ENCODE measurements at regions of chr19 and their contacts with region 1.

Region 1: GRCh38 chr19:58182989-58183816 is at the start of gene ZNF274:
- DNase-seq: peak; percentile 89 to 96 (median 92)
- ATAC-seq: peak; percentile 85
- H3K4me3 ChIP-seq: peak within 1 kb of the TSS; percentile 99
- H3K4me3 Mint-ChIP-seq: peak within 1 kb of the TSS; percentile 97
- H3K27ac ChIP-seq: peak within 1 kb of the TSS; percentile 99 to 100
- H3K27ac Mint-ChIP-seq: peak within 1 kb of the TSS; percentile 100
- H3K4me1 ChIP-seq: peaks cover 27% of the 10 kb centered on the region
- H3K4me1 Mint-ChIP-seq: peaks cover 23% of the 10 kb centered on the region
- H3K27me3 ChIP-seq: no peaks in the 10 kb centered on the region
- H3K27me3 Mint-ChIP-seq: no peaks in the 10 kb centered on the region
- CTCF ChIP-seq: no peak
- total RNA-seq, gene ZNF274: 51.0 to 51.4 TPM

Region 2: DNA sequence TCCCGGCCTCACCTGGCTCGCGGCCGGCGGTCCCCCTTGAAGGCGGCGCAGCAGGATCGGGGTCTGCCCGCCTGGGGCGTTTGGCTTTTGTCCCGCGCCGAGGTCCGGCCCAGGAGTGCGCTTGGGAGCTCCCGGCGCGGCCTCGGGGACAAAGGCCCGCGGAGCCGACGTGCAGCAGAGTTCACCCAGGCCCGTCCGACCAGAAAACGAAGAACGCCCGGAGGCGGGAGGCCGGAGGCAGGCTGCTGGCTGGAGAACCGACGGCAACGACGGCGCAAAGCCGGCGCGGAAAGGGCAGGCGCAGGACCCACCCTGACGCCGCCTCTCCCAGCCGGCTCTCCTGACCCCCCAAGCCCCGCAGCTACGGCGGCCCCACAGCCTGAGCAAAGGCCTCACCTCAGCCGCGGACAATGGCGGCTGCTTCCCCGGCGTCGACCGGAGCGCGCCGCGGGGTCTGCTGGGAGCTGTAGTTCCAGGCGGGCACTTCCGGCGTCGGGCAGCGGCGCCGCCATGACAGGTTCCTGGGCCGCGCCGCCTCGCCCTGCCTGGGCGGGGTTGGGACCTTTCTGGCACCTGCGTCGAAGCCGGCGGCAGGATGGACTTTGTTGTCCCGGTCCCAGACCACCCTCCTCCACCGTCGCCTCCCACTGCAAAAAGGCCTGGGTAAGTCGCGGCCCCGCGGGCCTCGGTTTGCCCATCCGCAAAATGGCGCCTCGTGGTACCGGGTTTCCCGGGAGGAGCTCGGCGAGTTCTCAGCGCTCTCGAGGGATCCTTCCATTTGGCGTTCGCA is 180.6 kb before region 1 on chr19 and contains the start of gene ZNF606:
- CTCF ChIA-PET with region 1: no interaction called
- POLR2A ChIA-PET with region 1: interaction called, 32 read pairs
- intact Hi-C with region 1: no loop called
- DNase-seq: peak; percentile 69 to 93 (median 81)
- ATAC-seq: peak; percentile 96
- H3K4me3 ChIP-seq: peak within 1 kb of the TSS; percentile 95
- H3K4me3 Mint-ChIP-seq: peak within 1 kb of the TSS; percentile 90
- H3K27ac ChIP-seq: peak within 1 kb of the TSS; percentile 71 to 87
- H3K27ac Mint-ChIP-seq: peak within 1 kb of the TSS; percentile 93
- H3K4me1 ChIP-seq: peaks cover 24% of the 10 kb centered on the region
- H3K4me1 Mint-ChIP-seq: peaks cover 23% of the 10 kb centered on the region
- H3K27me3 ChIP-seq: no peaks in the 10 kb centered on the region
- H3K27me3 Mint-ChIP-seq: no peaks in the 10 kb centered on the region
- CTCF ChIP-seq: no peak
- total RNA-seq, gene ZNF606: 11.1 to 13.6 TPM

Region 3: DNA sequence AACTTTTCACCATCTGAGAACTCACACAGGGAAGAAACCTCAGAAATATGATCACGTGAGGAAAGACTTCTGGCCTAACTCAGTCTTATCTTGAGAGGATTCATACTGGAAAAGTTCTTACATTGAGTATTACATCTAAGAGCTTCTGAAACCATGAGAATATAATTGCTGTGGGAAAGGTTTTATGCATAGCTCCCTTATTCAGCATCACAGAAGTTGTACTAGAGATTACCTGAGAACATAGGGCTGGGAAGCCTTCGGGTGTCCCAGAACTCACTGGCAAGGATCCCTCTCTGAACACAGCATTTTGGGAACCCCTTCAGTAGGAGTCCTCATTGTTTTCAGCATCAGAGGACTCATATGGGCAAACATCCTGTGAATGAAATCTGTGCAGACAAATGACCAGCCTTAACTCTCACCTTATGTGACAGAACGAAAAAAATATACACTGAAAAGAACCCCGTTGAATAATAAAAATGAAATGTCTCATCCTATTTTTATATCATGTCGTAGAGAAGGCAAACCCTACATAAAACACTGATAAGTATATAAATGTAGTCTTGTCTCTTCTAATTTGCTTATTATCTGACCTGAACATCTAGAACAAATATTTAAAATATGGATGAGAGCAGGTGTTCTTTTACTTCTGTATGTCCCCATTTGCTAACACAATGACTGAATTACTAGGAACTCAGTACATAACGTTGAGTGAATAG is 13.9 kb after region 1 on chr19:
- CTCF ChIA-PET with region 1: interaction called, 3 read pairs
- POLR2A ChIA-PET with region 1: interaction called, 11 read pairs
- intact Hi-C with region 1: no loop called
- DNase-seq: peak in 1 of 14 experiments; percentile 21
- ATAC-seq: no peak
- H3K4me3 ChIP-seq: no peak overlapping the region
- H3K4me3 Mint-ChIP-seq: no peak overlapping the region
- H3K27ac ChIP-seq: no peak overlapping the region
- H3K27ac Mint-ChIP-seq: no peak overlapping the region
- H3K4me1 ChIP-seq: no peaks in the 10 kb centered on the region
- H3K4me1 Mint-ChIP-seq: no peaks in the 10 kb centered on the region
- H3K27me3 ChIP-seq: no peaks in the 10 kb centered on the region
- H3K27me3 Mint-ChIP-seq: no peaks in the 10 kb centered on the region
- CTCF ChIP-seq: no peak

Region 4: GRCh38 chr19:58209577-58209976 is 26.4 kb after region 1 on chr19:
- CTCF ChIA-PET with region 1: no interaction called
- POLR2A ChIA-PET with region 1: no interaction called
- intact Hi-C with region 1: no loop called
- DNase-seq: no peak
- ATAC-seq: no peak
- H3K4me3 ChIP-seq: no peak overlapping the region
- H3K4me3 Mint-ChIP-seq: no peak overlapping the region
- H3K27ac ChIP-seq: no peak overlapping the region
- H3K27ac Mint-ChIP-seq: no peak overlapping the region
- H3K4me1 ChIP-seq: no peaks in the 10 kb centered on the region
- H3K4me1 Mint-ChIP-seq: no peaks in the 10 kb centered on the region
- H3K27me3 ChIP-seq: no peaks in the 10 kb centered on the region
- H3K27me3 Mint-ChIP-seq: no peaks in the 10 kb centered on the region
- CTCF ChIP-seq: no peak

Region 5: DNA sequence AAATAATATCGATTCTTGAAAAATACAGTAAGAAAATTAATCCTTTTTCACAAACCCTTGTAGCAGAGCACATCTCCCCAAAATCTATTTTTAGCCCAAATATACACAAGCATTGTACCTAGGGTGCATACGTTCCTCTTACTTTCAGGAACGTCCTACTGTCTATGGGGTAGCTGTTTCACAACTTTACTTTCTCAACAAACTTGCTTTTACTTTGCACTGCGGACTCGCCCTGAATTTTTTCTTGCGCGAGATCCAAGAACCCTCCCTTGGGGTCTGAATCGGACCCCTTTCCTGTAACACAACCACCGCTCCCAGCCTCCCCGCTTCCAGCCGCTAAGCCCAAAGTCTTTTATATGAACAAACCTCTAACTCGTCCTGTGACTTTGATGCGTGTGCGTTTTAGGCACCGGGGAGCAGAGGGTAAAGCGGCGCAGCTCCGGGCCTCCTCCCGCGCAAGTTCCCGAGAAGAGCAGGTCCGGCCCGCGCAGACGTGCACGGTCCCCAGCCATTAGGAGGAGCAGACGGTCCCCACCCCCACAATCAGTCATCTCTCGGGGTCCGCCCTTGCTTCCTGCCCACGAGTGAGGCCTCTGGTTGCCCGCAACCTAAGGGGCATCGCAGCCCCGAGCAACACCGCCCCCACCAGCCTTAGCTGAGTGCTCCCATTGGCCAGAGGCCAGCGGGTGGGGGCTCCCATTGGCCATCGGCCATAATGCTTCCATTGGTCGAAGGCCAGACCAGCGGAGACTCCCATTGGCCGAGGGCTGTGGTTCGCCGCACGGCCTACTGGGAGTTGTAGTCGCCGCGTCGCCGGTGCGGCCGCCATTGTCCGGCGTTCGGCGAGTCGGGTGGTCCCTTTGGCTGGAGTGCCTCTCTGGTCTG is 95.2 kb after region 1 on chr19 and contains the start of gene ZNF8:
- CTCF ChIA-PET with region 1: no interaction called
- POLR2A ChIA-PET with region 1: interaction called, 20 read pairs
- intact Hi-C with region 1: loop called (anchors 1 kb)
- DNase-seq: peak; percentile 89 to 99 (median 96)
- ATAC-seq: peak; percentile 96
- H3K4me3 ChIP-seq: peak within 1 kb of the TSS; percentile 89
- H3K4me3 Mint-ChIP-seq: peak within 1 kb of the TSS; percentile 98
- H3K27ac ChIP-seq: peak within 1 kb of the TSS; percentile 81 to 85
- H3K27ac Mint-ChIP-seq: peak within 1 kb of the TSS; percentile 92
- H3K4me1 ChIP-seq: peaks cover 29% of the 10 kb centered on the region
- H3K4me1 Mint-ChIP-seq: peaks cover 45% of the 10 kb centered on the region
- H3K27me3 ChIP-seq: no peaks in the 10 kb centered on the region
- H3K27me3 Mint-ChIP-seq: no peaks in the 10 kb centered on the region
- CTCF ChIP-seq: no peak
- total RNA-seq, gene ZNF8: 9.5 to 9.6 TPM

Region 6: GRCh38 chr19:58362272-58362994 is 179.2 kb after region 1 on chr19 and contains the start of gene ZNF497:
- CTCF ChIA-PET with region 1: no interaction called
- POLR2A ChIA-PET with region 1: interaction called, 15 read pairs
- intact Hi-C with region 1: no loop called
- DNase-seq: peak; percentile 92 to 99 (median 97)
- ATAC-seq: peak; percentile 90
- H3K4me3 ChIP-seq: peak within 1 kb of the TSS; percentile 84
- H3K4me3 Mint-ChIP-seq: peak within 1 kb of the TSS; percentile 94
- H3K27ac ChIP-seq: peak within 1 kb of the TSS; percentile 58 to 69
- H3K27ac Mint-ChIP-seq: peak within 1 kb of the TSS; percentile 84
- H3K4me1 ChIP-seq: peaks cover 22% of the 10 kb centered on the region
- H3K4me1 Mint-ChIP-seq: peaks cover 12% of the 10 kb centered on the region
- H3K27me3 ChIP-seq: no peaks in the 10 kb centered on the region
- H3K27me3 Mint-ChIP-seq: no peaks in the 10 kb centered on the region
- CTCF ChIP-seq: no peak
- total RNA-seq, gene ZNF497: 0.28 to 0.55 TPM

Region 7: GRCh38 chr19:58400916-58401839 is 218.0 kb after region 1 on chr19:
- CTCF ChIA-PET with region 1: no interaction called
- POLR2A ChIA-PET with region 1: no interaction called
- intact Hi-C with region 1: loop called in 1 of 2 experiments (anchors 5 kb)
- DNase-seq: peak; percentile 98 to 100 (median 99)
- ATAC-seq: peak; percentile 95
- H3K4me3 ChIP-seq: peak overlapping the region; percentile 75
- H3K4me3 Mint-ChIP-seq: peak overlapping the region; percentile 88
- H3K27ac ChIP-seq: peak overlapping the region; percentile 59 to 94
- H3K27ac Mint-ChIP-seq: peak overlapping the region; percentile 86
- H3K4me1 ChIP-seq: peaks cover 20% of the 10 kb centered on the region
- H3K4me1 Mint-ChIP-seq: peaks cover 9% of the 10 kb centered on the region
- H3K27me3 ChIP-seq: peaks cover 11 to 15% of the 10 kb centered on the region in 2 experiments
- H3K27me3 Mint-ChIP-seq: peaks cover 25% of the 10 kb centered on the region
- CTCF ChIP-seq: no peak